WTC11 (cell line): ENCODE measurements at regions of chr9 and their contacts with region 1.

Region 1: DNA sequence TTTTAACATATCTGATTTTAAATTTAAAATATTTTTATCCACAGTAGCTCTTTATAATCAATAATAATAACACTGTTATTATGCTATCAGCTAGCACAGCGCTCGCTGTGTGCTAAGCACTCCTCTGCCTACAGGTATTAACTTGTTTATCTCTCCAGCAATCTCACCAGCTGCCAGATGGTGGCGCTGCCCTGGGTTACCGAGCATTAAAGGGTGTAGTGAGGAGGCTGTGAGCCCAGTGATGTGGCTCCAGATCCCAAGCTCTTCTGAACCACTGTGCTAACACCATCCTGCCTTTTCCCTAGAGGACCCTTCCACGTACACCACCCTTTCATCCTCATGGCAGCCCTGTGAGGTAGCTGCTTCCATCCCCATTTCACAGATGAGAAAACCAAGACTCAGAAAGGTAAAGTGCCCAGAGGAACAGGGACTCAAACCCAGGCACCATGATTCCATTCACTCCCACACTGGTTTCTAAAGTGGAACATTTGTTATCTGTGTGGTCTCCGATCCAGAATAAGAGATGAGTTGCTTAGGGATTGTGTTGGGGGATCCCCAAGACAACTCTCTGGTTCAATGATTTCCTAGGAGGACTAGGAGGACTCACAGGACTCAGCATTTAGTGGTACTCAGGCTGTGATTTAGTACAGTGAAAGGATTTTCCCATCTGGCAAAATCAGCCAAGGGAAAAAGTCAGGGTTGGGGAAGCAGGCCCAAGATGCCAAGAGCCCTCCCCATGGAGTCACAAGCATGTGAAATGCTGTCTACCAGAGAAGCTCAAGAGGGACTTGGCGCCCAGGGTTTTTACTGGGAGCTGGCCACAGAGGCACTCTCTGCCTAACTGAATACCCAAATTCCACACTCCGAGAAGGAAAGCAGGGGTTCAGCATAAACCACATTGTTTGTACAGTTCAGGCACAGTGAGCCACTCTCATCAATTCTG is 7.0 kb downstream of the IGFBPL1 start:
- DNase-seq: peak; percentile 89
- ATAC-seq: peak; percentile 79
- H3K4me3 Mint-ChIP-seq: no peak overlapping the region
- H3K27ac Mint-ChIP-seq: no peak overlapping the region
- H3K4me1 Mint-ChIP-seq: peaks cover 39% of the 10 kb centered on the region
- H3K27me3 Mint-ChIP-seq: peaks cover 3% of the 10 kb centered on the region; the same call in 1 of the 2 replicates
- CTCF ChIP-seq: peak; percentile 88

Region 2: GRCh38 chr9:38432922-38433510 is 15.7 kb after region 1 on chr9:
- CTCF ChIA-PET with region 1: interaction called, 26 read pairs
- POLR2A ChIA-PET with region 1: no interaction called
- DNase-seq: no peak
- ATAC-seq: peak; percentile 55
- H3K4me3 Mint-ChIP-seq: no peak overlapping the region
- H3K27ac Mint-ChIP-seq: no peak overlapping the region
- H3K4me1 Mint-ChIP-seq: peaks cover 24% of the 10 kb centered on the region
- H3K27me3 Mint-ChIP-seq: peaks cover 14% of the 10 kb centered on the region
- CTCF ChIP-seq: peak; percentile 57

Region 3: GRCh38 chr9:38620483-38621433 is 203.5 kb after region 1 on chr9 and contains the start of gene ANKRD18A:
- CTCF ChIA-PET with region 1: interaction called, 13 read pairs
- POLR2A ChIA-PET with region 1: no interaction called
- DNase-seq: peak; percentile 96
- ATAC-seq: peak; percentile 85
- H3K4me3 Mint-ChIP-seq: peak within 1 kb of the TSS; percentile 88
- H3K27ac Mint-ChIP-seq: peak within 1 kb of the TSS; percentile 76; the same call in 1 of the 2 replicates
- H3K4me1 Mint-ChIP-seq: peaks cover 12% of the 10 kb centered on the region
- H3K27me3 Mint-ChIP-seq: peaks cover 46% of the 10 kb centered on the region
- CTCF ChIP-seq: peak; percentile 46
- total RNA-seq, gene ANKRD18A: 10.8 to 15.7 TPM (median 12.9 TPM) in 3 replicates